ENCODE measurements at regions of chr2 and their contacts with region 1.

Region 1: DNA sequence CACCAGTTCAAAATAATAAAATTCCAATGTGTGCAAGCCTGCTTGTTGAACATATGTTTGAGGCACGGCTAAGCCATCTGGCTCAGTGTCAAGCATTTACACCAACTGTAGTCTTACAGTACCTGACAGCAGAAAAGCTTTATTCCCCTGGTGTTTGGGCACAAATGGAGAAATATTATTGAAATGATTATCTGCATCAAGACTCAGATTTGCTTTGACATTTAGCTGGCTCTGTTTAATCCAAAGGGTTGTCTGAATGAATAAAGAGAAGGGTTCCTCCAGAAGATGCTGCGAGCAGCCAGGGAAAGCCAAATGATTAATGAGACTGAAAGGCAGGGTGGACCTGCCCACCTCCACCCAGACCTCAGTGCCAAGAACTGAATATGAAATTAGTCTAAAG is 393.2 kb upstream of the GALNT5 start:
- DNase-seq: no peak
- H3K4me3 ChIP-seq: no peak overlapping the region
- H3K27ac ChIP-seq: no peak overlapping the region
- H3K27me3 ChIP-seq: no peaks in the 10 kb centered on the region
- CTCF ChIP-seq: no peak

Region 2: GRCh38 chr2:156553714-156554442 is 310.4 kb before region 1 on chr2:
- CTCF ChIA-PET with region 1: interaction called, 13 read pairs
- POLR2A ChIA-PET with region 1: no interaction called
- DNase-seq: no peak
- H3K4me3 ChIP-seq: no peak overlapping the region
- H3K27ac ChIP-seq: no peak overlapping the region
- H3K27me3 ChIP-seq: no peaks in the 10 kb centered on the region
- CTCF ChIP-seq: no peak

Measured in AG04450 (cell line).